Activated CD4-positive, alpha-beta memory T cell treated with anti-CD3 and anti-CD28 coated beads for 36 hours (primary cell): ENCODE measurements at regions of chr11 and their contacts with region 1.

Region 1: DNA sequence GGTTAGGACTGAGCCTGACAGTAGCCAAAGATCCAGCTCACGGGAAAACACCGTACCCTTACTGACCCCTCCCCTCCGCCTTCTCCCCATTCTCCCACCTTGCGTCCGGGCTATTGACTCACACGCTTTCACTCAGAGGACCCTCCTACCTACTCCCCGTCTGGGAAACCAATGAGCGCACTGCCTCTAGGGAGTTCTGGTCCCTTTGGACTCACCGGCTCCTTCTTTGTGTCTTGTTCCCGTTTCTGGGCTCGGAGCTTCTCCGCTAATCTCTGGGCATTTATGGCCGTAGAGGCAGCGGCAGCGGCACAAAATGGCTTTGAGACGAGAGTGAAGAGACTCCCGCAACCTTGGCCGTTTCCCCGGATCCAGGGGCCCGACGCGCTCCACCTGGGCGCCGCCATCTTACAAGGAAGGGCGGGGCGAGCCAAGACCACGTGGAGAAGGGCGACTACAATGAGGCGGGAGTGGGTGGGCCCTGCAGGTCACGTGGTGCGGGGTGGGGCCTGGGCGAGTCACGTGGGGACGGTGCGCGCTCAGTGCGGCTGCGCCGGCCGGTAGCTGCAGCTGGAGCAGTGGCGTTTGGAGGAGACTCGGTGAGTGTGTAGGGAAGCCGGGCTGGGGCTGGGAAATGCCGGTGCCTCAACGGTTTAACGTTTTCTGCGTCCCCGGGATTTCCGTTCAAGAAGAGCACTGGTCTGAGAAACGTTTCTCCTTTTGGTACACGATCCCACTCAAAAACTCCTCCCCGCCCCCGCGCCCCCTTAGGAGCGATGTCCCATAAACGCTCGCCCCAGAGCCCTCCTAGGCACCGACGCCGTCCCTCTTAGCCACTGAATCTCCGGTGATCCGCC is at the starts of genes FAM118B and RPUSD4:
- DNase-seq: peak; percentile 99
- H3K4me3 Mint-ChIP-seq: peak within 1 kb of the TSS; percentile 98
- H3K27ac Mint-ChIP-seq: peak within 1 kb of the TSS; percentile 89
- H3K4me1 Mint-ChIP-seq: peaks cover 41% of the 10 kb centered on the region
- H3K27me3 Mint-ChIP-seq: no peaks in the 10 kb centered on the region
- total RNA-seq, gene FAM118B: 8.0 to 9.7 TPM
- total RNA-seq, gene RPUSD4: 32.4 to 34.1 TPM

Region 2: DNA sequence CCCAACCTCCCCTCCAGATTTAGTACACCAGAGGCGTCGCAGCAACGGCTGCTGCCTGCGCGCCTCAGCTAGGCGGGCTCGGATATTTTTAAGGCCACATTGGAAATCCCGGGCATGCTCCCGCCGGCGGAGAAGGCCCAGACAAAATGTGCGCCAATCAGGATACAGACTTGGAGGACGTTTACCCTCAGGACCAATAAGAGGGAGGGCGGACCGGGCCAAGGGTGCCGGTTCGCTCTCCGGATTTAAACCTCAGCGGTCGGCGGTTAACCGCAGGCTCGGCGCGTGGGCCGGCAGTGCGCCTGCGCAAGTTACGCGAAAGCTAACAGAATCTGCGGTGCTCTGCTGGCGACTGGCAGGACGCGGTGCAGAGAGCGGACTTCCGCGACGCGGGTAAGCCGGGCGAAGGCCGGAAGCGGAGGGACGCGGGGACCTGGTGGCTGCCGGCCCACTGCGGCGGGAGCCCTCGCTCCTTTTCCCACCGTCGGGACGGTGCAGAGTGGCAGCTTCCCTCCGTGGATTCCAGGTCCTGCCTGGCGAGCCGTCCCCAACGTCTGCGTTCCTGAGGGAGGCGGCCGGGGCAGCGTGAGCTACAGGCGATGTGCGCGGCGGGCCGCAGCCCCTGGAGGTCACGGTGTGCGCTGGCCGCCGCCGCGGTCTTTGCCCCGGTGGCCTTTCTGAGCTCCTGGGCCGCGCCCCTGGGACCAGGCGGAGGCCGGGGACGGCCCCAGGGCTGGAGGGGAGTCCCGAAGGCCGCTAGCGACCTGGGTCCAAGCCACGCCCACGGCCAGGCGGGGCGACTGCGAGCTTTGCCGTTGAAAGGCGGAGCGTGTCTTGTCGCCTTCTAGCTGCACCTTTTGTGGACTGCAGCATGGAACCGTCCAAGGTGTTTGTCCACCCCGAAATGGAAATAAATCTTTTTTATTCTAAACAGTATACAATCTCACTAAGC is 323.8 kb before region 1 on chr11 and contains the start of gene HYLS1:
- CTCF ChIA-PET with region 1: no interaction called
- POLR2A ChIA-PET with region 1: no interaction called
- intact Hi-C with region 1: loop called (anchors 1 kb)
- DNase-seq: peak; percentile 99
- H3K4me3 Mint-ChIP-seq: peak within 1 kb of the TSS; percentile 74
- H3K27ac Mint-ChIP-seq: peak within 1 kb of the TSS; percentile 93
- H3K4me1 Mint-ChIP-seq: peaks cover 31% of the 10 kb centered on the region
- H3K27me3 Mint-ChIP-seq: peaks cover 6% of the 10 kb centered on the region
- total RNA-seq, gene HYLS1: 8.2 to 8.3 TPM

Region 3: DNA sequence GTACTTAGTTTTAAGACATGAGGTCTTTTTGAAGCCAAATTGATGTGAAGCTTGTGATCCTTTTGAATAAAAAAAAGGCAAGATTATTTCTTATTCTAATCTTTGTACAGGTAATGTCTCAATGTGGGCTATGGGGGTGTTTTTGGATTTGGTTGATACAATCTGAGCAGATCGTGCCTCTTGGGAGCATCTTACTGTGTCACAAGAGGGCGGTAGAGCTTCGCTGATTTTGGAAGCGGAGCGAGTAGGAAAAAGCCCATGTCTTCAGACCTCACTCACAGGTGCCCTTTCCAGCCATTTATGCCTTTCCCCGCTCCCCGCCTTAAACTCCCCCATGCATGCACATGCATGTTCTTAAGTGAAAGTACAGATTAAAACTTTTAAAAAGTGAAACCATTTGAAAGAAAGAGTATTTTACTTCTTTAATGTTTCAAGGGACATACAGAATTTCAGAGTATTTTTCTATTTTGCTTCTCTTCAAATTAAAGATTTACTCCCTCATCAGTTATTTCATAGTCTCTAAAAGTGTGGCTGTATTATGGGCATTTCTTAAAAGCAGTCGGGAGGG is 288.4 kb before region 1 on chr11:
- CTCF ChIA-PET with region 1: no interaction called
- POLR2A ChIA-PET with region 1: no interaction called
- intact Hi-C with region 1: loop called (anchors 1 kb)
- DNase-seq: peak; percentile 69
- H3K4me3 Mint-ChIP-seq: no peak overlapping the region
- H3K27ac Mint-ChIP-seq: no peak overlapping the region
- H3K4me1 Mint-ChIP-seq: no peaks in the 10 kb centered on the region
- H3K27me3 Mint-ChIP-seq: peaks cover 18% of the 10 kb centered on the region

Region 4: DNA sequence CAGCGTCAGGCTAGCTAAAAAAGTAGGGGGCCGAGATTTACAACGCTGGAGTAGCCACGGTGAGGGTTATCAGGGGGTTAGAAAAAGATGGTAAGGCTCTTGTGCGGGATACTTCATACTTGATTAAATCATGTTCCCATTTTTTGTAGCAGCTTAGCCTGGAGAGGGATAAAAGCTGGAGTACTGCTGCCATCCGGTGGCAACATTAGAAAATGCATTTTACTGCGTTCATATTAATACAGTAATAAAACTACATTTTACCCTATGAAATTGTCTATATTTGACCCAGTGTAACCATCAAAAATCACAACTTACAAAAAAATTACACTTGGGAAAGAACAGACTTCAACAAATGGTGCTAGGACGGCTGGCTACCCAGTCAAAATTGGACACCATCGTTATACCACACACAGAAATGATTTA is 17.3 kb before region 1 on chr11:
- CTCF ChIA-PET with region 1: no interaction called
- POLR2A ChIA-PET with region 1: no interaction called
- intact Hi-C with region 1: no loop called
- DNase-seq: peak; percentile 43
- H3K4me3 Mint-ChIP-seq: no peak overlapping the region
- H3K27ac Mint-ChIP-seq: no peak overlapping the region
- H3K4me1 Mint-ChIP-seq: no peaks in the 10 kb centered on the region
- H3K27me3 Mint-ChIP-seq: no peaks in the 10 kb centered on the region

Region 5: GRCh38 chr11:126268708-126269579 is 57.5 kb after region 1 on chr11 and contains the starts of genes FOXRED1 and SRPRA:
- CTCF ChIA-PET with region 1: no interaction called
- POLR2A ChIA-PET with region 1: interaction called, 8 read pairs
- intact Hi-C with region 1: loop called (anchors 1 kb)
- DNase-seq: peak; percentile 100
- H3K4me3 Mint-ChIP-seq: peak within 1 kb of the TSS; percentile 92
- H3K27ac Mint-ChIP-seq: peak within 1 kb of the TSS; percentile 94
- H3K4me1 Mint-ChIP-seq: peaks cover 33% of the 10 kb centered on the region
- H3K27me3 Mint-ChIP-seq: no peaks in the 10 kb centered on the region
- total RNA-seq, gene FOXRED1: 41.7 to 42.3 TPM
- total RNA-seq, gene SRPRA: 142 to 149 TPM

Region 6: DNA sequence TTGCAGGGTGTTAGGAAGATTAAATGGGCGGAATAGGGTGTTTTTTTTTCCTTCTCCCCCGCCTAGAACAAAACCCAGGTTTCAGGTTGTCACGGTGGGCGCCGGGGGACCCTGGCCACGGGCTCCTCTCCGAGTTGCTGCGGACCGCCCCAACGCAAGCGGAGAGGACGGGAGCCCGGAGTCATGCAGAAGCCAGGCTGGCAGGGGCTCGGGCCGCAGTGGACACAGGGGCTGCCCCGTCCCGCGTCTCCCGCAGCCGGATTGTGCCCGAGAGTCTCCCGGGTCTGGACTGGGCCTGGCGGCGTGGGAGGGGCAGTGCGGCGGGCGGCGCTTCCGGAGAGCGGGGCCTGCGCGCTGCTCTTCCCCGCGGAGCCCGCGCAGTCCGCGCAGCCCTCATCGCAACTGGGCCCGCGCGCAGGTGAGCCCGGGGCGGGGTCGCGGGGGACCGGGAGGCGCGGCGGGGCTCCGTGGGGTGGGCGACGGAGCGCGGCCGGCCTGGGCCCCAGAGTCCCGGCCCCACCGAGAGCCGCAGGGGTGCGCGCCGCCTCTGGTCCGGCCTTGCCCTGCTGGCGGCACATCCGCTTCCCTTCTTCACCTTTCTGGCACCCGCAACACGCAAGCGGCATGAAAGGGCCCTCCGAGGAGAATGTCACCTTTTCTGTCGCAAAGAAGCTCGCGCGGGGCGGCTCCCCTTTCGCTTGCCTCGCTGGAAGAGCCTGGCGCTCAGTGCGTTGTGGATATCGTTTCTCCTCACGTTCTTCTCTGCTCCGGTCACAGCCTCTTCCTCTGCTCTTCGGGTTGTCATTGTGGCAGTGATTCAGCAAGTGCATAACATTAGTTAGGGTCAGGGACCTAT is 71.5 kb after region 1 on chr11 and contains the start of gene TIRAP:
- CTCF ChIA-PET with region 1: no interaction called
- POLR2A ChIA-PET with region 1: no interaction called
- intact Hi-C with region 1: loop called (anchors 1 kb)
- DNase-seq: peak; percentile 73
- H3K4me3 Mint-ChIP-seq: peak within 1 kb of the TSS; percentile 97
- H3K27ac Mint-ChIP-seq: peak within 1 kb of the TSS; percentile 91
- H3K4me1 Mint-ChIP-seq: peaks cover 39% of the 10 kb centered on the region
- H3K27me3 Mint-ChIP-seq: no peaks in the 10 kb centered on the region
- total RNA-seq, gene TIRAP: 7.3 to 8.8 TPM

Region 7: DNA sequence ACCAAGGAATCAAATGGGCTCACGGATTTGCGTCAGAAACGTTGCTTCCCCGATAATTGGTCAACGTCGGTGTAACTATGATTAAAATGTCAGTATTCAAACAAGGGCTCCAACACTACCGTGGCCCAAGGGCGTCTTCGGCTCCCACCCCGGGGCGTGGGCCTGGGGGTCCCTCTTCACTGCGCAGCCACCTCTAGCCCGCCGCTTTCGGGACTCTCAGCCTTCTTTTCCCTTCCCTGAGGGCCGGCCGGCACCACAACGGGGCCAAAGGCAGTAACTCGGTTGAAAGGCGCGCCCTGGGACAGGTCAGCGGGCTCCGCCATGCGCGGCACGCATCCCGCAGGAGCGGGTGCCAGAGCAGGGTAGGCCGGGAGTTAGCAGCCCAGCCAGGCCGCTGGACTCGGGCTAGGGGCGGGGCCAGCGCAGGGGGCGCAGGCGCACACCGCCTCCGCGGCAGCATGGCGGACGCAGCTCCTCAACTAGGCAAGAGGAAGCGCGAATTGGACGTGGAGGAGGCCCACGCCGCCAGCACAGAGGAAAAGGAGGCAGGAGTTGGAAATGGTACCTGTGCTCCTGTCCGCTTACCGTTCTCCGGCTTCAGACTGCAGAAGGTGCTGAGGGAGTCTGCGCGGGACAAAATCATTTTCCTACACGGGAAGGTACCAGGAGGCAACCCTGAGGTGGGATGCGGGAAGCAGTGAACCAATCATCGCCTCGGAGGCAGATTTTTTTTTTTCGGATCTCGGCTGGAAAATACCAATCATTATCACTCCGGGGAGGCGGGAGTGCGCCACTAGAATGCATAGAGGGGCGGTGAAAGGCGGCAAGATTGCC is 92.4 kb after region 1 on chr11 and contains the start of gene DCPS:
- CTCF ChIA-PET with region 1: no interaction called
- POLR2A ChIA-PET with region 1: no interaction called
- intact Hi-C with region 1: loop called (anchors 1 kb)
- DNase-seq: peak; percentile 92
- H3K4me3 Mint-ChIP-seq: peak within 1 kb of the TSS; percentile 95
- H3K27ac Mint-ChIP-seq: peak within 1 kb of the TSS; percentile 96
- H3K4me1 Mint-ChIP-seq: peaks cover 34% of the 10 kb centered on the region
- H3K27me3 Mint-ChIP-seq: no peaks in the 10 kb centered on the region
- total RNA-seq, gene DCPS: 40.1 to 43.9 TPM

Region 8: DNA sequence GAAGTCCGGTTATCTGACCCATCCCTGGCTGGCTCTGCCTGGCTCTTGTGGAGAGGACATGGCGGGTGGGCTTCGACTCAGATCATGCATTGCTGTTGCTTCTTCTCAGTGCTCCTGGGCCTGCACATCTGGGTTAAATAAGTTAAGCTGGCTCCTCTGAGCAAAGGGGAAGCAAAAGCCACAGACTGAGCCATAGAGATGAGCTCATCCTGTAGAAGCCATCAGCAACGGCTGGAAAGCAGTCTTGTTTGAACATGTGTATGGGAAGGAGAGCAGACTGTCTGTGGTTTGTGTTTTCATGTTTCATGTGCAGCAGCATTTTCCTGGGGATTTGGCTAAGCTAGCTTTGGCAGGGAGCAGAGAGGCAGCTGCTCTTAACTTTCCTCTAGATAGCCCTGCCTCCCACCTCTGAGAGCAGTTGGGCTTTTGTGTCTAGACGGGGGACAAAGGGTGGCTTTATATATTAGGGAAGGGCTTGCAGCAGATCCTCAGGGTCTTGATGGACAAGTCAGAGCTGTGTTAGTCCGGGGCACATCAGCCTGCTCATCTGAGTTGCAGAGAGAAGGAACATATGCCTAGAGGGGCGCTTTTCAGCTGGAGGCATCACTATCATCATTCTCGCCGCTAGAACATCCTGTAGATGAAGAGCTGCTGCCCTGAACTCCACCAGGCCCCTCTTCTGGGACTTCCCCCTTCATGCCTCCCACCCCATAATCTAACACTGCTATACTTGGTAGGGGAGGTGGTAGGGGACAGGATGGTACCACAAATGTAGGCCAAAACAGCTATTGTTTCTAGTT is 107.3 kb after region 1 on chr11:
- CTCF ChIA-PET with region 1: no interaction called
- POLR2A ChIA-PET with region 1: no interaction called
- intact Hi-C with region 1: no loop called
- DNase-seq: peak; percentile 43
- H3K4me3 Mint-ChIP-seq: no peak overlapping the region
- H3K27ac Mint-ChIP-seq: peak overlapping the region; percentile 75
- H3K4me1 Mint-ChIP-seq: peaks cover 30% of the 10 kb centered on the region
- H3K27me3 Mint-ChIP-seq: no peaks in the 10 kb centered on the region

Region 9: DNA sequence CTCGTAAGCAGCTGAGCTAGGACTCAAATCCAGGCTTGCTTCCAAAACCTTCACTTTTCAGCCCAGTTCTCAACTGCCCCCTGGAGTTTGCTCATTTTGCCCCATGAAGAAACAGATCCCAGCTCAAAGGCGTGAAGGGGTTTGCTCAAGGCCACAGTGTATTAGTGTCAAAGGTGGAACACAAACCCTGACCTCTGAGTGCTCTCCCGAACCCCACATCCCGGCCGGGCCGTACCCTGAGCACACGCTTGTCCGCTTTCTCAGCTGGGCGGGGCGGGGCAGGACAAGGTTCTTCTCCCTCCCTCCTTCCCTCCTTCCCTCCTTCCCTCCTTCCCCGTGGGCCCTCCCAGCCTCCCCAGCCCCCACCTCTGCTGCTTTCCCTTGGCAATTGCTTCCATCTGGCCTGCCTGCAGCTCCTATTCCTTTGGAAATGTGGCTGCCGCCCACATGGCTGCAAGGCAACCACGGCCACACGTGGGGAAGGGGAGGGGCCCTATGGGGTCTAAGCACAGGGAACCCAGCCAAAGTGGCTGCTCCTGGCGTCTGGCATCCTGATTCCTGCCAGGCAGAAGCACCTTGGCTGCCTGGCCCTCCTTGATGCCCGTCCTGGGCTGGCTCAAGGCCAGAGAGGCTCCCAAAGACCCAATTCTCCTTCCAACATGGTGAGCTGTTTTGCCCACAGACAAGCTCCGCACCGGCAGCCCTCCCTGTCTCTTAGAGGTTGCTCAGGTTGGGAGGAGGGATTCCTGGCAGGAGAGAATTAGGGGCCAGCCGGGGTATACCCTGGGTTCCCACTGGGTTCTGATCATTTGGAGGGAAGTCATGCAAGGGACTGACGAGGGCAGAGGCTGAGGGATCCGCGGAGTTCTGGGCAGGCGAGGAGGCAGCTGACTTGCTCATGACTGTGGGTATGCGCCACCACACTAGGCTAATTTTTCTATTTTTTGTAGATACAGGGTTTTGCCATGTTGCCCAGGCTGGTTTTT is 148.3 kb after region 1 on chr11:
- CTCF ChIA-PET with region 1: no interaction called
- POLR2A ChIA-PET with region 1: no interaction called
- intact Hi-C with region 1: no loop called
- DNase-seq: no peak
- H3K4me3 Mint-ChIP-seq: no peak overlapping the region
- H3K27ac Mint-ChIP-seq: no peak overlapping the region
- H3K4me1 Mint-ChIP-seq: peaks cover 10% of the 10 kb centered on the region
- H3K27me3 Mint-ChIP-seq: no peaks in the 10 kb centered on the region